ENCODE measurements at regions of chr13 and their contacts with region 1.

Region 1: DNA sequence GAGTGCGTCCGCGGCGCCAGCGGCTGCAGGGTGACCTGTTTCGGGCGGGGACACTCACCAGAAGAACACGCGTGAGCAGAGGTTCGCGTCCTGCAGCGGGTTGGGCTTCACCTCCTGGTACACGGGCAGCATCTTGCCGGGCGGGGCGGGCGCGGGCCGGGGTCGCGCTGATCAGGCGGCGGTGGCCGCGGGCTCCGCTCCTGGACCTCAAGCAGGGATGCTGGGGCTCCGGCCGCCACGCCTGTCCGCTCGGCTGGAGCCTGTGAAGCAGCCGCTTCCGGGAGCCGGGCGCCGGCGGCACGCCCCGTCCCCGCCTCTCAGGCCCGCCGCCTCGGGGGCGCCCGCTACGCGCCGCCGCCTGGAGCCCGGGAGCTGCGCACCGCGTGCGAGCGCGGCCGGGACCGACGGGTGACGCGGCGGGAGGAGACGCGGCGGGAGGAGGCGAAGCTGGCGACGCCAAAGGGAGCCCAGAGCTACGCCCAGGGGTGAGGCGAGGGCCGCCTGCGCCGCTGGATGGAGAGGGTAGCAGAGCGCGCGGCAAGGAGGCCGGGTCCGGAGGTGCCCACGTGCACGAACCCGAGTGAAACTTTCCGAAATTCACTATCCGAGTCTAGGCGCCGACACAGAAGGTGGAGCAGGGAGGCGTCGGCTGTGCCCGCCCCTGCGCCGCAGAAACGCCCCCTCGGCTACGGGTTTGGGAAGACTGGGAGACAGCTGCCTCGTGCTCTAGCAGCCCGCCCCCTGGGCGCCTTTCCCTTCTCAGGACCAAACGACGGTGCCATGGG is at the start of gene ABCC4:
- DNase-seq: peak; percentile 66
- H3K4me3 Mint-ChIP-seq: peak within 1 kb of the TSS; percentile 75
- H3K27ac Mint-ChIP-seq: peak within 1 kb of the TSS; percentile 41
- H3K4me1 Mint-ChIP-seq: peaks cover 10% of the 10 kb centered on the region
- H3K27me3 Mint-ChIP-seq: no peaks in the 10 kb centered on the region
- CTCF ChIP-seq: no peak
- total RNA-seq, gene ABCC4: 13.8 and 13.9 TPM in 2 replicates

Region 2: GRCh38 chr13:95317039-95317989 is 15.9 kb after region 1 on chr13:
- CTCF ChIA-PET with region 1: interaction called, 15 read pairs
- POLR2A ChIA-PET with region 1: no interaction called
- intact Hi-C with region 1: no loop called
- DNase-seq: peak; percentile 46
- H3K4me3 Mint-ChIP-seq: no peak overlapping the region
- H3K27ac Mint-ChIP-seq: no peak overlapping the region
- H3K4me1 Mint-ChIP-seq: no peaks in the 10 kb centered on the region
- H3K27me3 Mint-ChIP-seq: peaks cover 4% of the 10 kb centered on the region
- CTCF ChIP-seq: no peak

Region 3: GRCh38 chr13:95684418-95684817 is 383.0 kb after region 1 on chr13:
- CTCF ChIA-PET with region 1: no interaction called
- POLR2A ChIA-PET with region 1: no interaction called
- intact Hi-C with region 1: no loop called
- DNase-seq: no peak
- H3K4me3 Mint-ChIP-seq: no peak overlapping the region
- H3K27ac Mint-ChIP-seq: no peak overlapping the region
- H3K4me1 Mint-ChIP-seq: peaks cover 25% of the 10 kb centered on the region
- H3K27me3 Mint-ChIP-seq: no peaks in the 10 kb centered on the region
- CTCF ChIP-seq: no peak

Measured in MCF 10A (cell line).